ENCODE measurements at regions of chr7 and their contacts with region 1.

Region 1: DNA sequence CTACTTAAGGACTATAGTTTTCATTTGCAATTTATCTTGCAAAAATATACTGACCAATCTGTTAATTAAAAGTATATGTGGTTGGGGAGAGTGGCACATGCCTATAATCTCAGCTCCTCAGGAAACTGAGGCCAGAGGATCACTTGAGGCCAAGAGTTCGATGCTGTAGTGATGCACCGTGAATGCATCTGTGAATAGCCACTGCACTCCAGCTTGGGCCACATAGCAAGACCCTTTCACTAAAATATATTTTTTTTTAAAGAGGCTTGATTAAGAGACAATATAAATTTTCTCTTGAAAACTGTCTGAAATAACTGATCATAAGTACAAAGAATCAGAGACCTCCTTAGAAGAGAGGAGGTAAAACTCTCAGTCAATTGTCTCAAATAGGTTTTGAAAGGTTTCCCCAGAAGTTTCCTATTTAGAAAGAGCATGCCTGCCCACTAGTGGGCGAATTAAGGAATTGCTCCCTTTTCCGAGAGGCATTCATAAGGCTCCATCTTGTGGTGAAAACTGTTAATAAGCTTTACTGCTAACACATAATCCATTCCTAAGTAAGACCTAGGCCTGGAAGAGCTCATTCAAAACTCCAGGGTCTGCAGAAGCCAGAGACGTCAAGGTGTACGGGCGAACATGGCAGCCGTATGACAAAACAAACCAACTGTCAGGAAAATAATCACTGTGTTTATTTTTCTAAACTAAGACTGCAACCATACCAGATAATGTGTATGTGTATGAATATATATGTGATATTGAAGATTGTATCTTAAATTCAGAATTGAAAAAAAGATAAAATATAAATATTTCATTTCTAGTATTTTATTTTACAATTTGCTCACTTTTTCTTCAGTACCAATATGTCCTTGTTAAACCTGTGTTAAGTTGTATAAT is 6.8 kb upstream of the TAS2R40 start:
- DNase-seq: peak; percentile 92

Region 2: GRCh38 chr7:142853739-142854371 is 361.2 kb before region 1 on chr7:
- in situ Hi-C with region 1: loop called (anchors 25 kb)
- DNase-seq: peak; percentile 93

Region 3: DNA sequence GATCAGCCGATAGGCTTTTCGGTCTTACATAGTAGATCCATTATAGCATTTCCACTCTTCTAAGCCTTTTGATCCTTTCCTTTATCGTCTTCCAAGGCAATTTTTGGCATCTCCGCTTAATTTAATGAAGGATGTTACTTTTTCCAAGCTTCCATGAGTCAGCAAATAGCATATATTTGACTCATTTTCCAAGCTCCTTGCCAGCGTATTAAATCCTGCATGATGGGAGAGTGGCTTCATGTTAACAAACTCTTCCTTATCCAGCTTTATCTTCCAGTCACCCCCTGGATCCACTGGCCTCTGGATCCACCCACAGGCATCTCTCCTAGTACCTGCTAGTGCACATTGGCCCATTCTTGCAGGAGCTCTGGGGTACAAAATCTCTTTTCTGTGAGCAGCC is 201.1 kb before region 1 on chr7:
- in situ Hi-C with region 1: loop called (anchors 10 kb)
- DNase-seq: no peak

Measured in KBM-7 (cell line).